K562 (cell line): ENCODE measurements at regions of chr6 and their contacts with region 1.

Region 1: GRCh38 chr6:34560366-34561226 is 4.5 kb upstream of the SPDEF start:
- DNase-seq: peak; percentile 90 to 99 (median 92)
- ATAC-seq: peak; percentile 89
- H3K4me3 ChIP-seq: no peak overlapping the region
- H3K27ac ChIP-seq: peak overlapping the region; percentile 72
- H3K4me1 ChIP-seq: peaks cover 57 to 80% of the 10 kb centered on the region in 2 experiments
- H3K27me3 ChIP-seq: no peaks in the 10 kb centered on the region
- CTCF ChIP-seq: peak; percentile 60 to 66 (median 63)
- EP300 ChIP-seq: peak; percentile 91
- POLR2A ChIP-seq: peak; percentile 67
- RAD21 ChIP-seq: peak; percentile 56 to 78

Region 2: GRCh38 chr6:34459899-34460593 is 100.5 kb before region 1 on chr6:
- CTCF ChIA-PET with region 1: no interaction called
- POLR2A ChIA-PET with region 1: interaction called, 4 read pairs
- in situ Hi-C with region 1: no loop called
- intact Hi-C with region 1: loop called (anchors 1 kb)
- DNase-seq: peak; percentile 74 to 82 (median 76)
- ATAC-seq: peak; percentile 79
- H3K4me3 ChIP-seq: no peak overlapping the region
- H3K27ac ChIP-seq: no peak overlapping the region
- H3K4me1 ChIP-seq: peaks cover 10 to 16% of the 10 kb centered on the region in 2 experiments; a peak in 4 of 5 replicates
- H3K27me3 ChIP-seq: no peaks in the 10 kb centered on the region
- CTCF ChIP-seq: peak; percentile 85 to 94 (median 85)
- EP300 ChIP-seq: no peak
- POLR2A ChIP-seq: no peak
- RAD21 ChIP-seq: peak; percentile 94 to 97

Region 3: DNA sequence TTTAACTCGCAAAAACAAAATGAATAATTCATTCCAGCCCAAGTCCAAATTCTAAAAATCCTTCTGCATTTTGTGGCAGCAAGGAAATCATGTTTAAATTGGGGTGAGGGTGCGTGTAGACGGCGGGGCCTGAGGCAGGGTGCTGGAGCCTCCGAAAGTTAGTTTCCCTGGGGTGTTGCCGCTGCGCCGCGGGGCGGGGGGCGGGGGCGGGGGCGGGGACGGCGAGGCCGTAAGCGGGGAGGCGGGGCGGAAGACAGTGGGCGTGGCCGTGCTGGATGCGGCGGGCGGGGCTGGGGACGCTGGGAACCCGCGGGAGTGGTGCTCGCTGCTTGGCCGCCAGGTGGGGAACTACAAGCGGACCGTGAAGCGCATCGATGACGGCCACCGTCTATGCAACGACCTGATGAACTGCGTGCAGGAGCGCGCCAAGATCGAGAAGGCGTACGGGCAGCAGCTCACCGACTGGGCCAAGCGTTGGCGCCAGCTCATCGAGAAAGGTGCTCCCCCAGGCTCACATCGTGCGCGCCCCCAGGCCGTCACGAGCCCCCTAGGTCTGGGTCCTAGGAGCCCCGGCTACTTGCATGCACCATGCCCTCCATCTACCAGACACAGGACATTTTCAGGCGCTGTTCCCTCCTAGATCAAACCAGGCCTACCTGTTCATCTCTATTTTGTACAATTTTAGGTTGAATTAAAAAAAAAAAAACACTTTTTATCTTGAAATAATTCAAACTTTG is 33.4 kb before region 1 on chr6:
- CTCF ChIA-PET with region 1: interaction called, 8 read pairs
- POLR2A ChIA-PET with region 1: interaction called, 3 read pairs
- in situ Hi-C with region 1: no loop called
- intact Hi-C with region 1: loop called (anchors 1 kb)
- DNase-seq: peak; percentile 98 to 99 (median 99)
- ATAC-seq: peak; percentile 94
- H3K4me3 ChIP-seq: no peak overlapping the region
- H3K27ac ChIP-seq: peak overlapping the region; percentile 45
- H3K4me1 ChIP-seq: peaks cover 24 to 55% of the 10 kb centered on the region in 2 experiments
- H3K27me3 ChIP-seq: no peaks in the 10 kb centered on the region
- CTCF ChIP-seq: peak; percentile 70 to 92 (median 91)
- EP300 ChIP-seq: no peak
- POLR2A ChIP-seq: peak; percentile 53; the same call in 1 of the 2 replicates
- RAD21 ChIP-seq: peak; percentile 80 to 84

Region 4: DNA sequence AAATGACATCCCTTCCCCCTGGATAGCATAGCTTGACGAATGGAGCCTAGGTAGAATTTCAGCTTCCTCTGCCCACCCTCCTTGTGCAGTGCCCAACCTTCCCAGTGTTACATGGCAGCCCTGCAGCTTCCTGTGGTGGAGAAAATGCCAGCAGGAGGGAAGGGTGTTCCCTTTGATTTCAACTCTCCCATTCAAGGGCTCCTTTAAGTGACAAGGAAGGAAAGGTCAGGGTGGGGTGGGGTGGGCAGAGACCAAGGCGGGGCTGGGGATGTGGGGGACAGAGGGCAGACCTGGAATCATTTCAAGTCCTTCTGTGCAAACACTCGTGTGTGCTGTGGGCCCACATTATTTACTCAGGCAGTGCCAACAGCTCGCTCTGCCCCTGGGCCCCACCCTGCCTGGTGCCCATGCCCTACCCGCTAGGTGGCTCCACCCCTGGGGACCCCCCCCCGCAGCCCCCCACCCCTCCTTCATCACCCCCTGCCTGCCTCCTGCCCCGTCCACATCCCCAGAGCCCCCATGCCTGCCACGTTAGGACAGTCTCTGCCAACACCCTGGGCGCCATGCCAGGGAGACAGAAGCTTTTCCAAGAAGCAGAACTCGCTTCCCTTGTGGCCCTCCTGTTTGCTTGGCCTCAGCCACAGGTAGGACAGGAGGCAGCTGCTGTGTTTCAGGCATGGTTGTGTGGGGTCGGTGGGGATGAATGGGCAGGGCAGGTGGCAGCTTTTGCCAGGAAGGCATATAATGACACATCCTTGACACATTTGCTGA is 13.9 kb before region 1 on chr6:
- CTCF ChIA-PET with region 1: no interaction called
- POLR2A ChIA-PET with region 1: interaction called, 15 read pairs
- in situ Hi-C with region 1: no loop called
- intact Hi-C with region 1: no loop called
- DNase-seq: no peak
- ATAC-seq: no peak
- H3K4me3 ChIP-seq: no peak overlapping the region
- H3K27ac ChIP-seq: no peak overlapping the region
- H3K4me1 ChIP-seq: peaks cover 24 to 65% of the 10 kb centered on the region in 2 experiments
- H3K27me3 ChIP-seq: no peaks in the 10 kb centered on the region
- CTCF ChIP-seq: no peak
- EP300 ChIP-seq: no peak
- POLR2A ChIP-seq: no peak
- RAD21 ChIP-seq: no peak